MCF 10A (cell line): ENCODE measurements at regions of chr10 and their contacts with region 1.

Region 1: GRCh38 chr10:12333380-12334185 is 15.8 kb upstream of the CAMK1D start:
- DNase-seq: peak; percentile 94
- H3K4me3 Mint-ChIP-seq: peak overlapping the region; percentile 44
- H3K27ac Mint-ChIP-seq: peak overlapping the region; percentile 68
- H3K4me1 Mint-ChIP-seq: peaks cover 11% of the 10 kb centered on the region
- H3K27me3 Mint-ChIP-seq: no peaks in the 10 kb centered on the region
- CTCF ChIP-seq: no peak

Region 2: GRCh38 chr10:12271210-12271540 is 62.4 kb before region 1 on chr10:
- CTCF ChIA-PET with region 1: no interaction called
- POLR2A ChIA-PET with region 1: interaction called, 3 read pairs
- intact Hi-C with region 1: loop called (anchors 2 kb)
- DNase-seq: no peak
- H3K4me3 Mint-ChIP-seq: peak overlapping the region; percentile 47
- H3K27ac Mint-ChIP-seq: peak overlapping the region; percentile 66
- H3K4me1 Mint-ChIP-seq: peaks cover 6% of the 10 kb centered on the region
- H3K27me3 Mint-ChIP-seq: no peaks in the 10 kb centered on the region
- CTCF ChIP-seq: no peak

Region 3: GRCh38 chr10:12960334-12960898 is 626.8 kb after region 1 on chr10:
- CTCF ChIA-PET with region 1: no interaction called
- POLR2A ChIA-PET with region 1: no interaction called
- intact Hi-C with region 1: no loop called
- DNase-seq: no peak
- H3K4me3 Mint-ChIP-seq: no peak overlapping the region
- H3K27ac Mint-ChIP-seq: no peak overlapping the region
- H3K4me1 Mint-ChIP-seq: peaks cover under 1% of the 10 kb centered on the region
- H3K27me3 Mint-ChIP-seq: no peaks in the 10 kb centered on the region
- CTCF ChIP-seq: no peak